T-cell (primary cell): ENCODE measurements at regions of chr3 and their contacts with region 1.

Region 1: DNA sequence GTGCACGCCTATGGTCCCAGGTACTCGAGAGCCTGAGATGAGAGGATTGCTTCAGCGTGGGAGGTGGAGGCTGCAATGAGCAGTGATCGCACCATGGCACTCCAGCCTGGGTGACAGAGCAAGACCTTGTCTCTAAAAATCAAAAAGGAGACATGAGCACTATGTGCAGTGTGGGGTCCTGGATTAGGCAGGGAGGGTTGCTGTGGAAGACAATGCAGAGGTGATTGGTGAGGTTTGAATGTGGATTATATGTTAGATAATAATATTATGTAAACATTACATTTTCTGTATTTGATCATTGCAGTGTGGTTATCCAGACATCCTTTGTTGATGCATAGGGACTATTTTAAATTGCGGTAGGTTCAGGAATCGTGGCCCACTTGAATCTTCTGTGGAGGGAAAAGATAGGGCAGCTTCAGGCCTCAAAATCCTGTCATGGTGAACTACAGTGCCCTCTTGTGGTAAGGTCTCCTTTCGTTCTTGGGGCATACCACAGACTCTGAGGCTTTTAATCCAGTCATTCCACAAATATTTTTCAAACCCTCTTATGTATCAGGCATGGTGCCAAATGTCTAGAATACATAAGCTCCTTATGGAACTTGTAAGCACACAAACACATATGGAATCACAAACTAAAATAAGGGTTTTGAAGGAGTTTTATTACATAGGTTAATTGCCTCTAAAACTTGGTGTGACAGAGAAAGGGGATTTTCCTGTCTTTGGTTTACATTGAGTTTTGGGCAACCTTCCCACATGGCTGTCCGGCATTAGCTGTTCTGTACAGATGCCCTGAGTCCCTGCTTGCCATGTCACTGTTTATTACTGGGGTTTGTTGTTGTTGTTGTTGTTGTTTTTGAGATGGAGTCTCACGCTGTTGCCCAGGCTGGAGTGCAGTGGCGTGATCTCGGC is 37.7 kb downstream of the GPD1L start:
- DNase-seq: peak in 28 of 35 experiments; percentile 7 to 82 (median 30)
- ATAC-seq: peak; percentile 52 to 66 (median 61)
- H3K4me3 ChIP-seq: no peak overlapping the region
- H3K4me3 Mint-ChIP-seq: no peak overlapping the region
- H3K27ac ChIP-seq: no peak overlapping the region
- H3K27ac Mint-ChIP-seq: no peak overlapping the region
- H3K4me1 ChIP-seq: peaks cover 0 to under 1% of the 10 kb centered on the region in 2 experiments
- H3K4me1 Mint-ChIP-seq: peaks cover 0 to 6% (median 3%) of the 10 kb centered on the region in 3 donors
- H3K27me3 ChIP-seq: no peaks in the 10 kb centered on the region
- H3K27me3 Mint-ChIP-seq: no peaks in the 10 kb centered on the region

Region 2: GRCh38 chr3:32018757-32019564 is 125.1 kb before region 1 on chr3:
- CTCF ChIA-PET with region 1: interaction called, 16 to 33 read pairs
- POLR2A ChIA-PET with region 1: interaction called in 1 of 2 experiments, 4 read pairs
- DNase-seq: peak in 1 of 35 experiments; percentile 56
- ATAC-seq: peak in 2 of 4 experiments; percentile 40 to 52
- H3K4me3 ChIP-seq: no peak overlapping the region
- H3K4me3 Mint-ChIP-seq: no peak overlapping the region
- H3K27ac ChIP-seq: no peak overlapping the region
- H3K27ac Mint-ChIP-seq: no peak overlapping the region
- H3K4me1 ChIP-seq: no peaks in the 10 kb centered on the region
- H3K4me1 Mint-ChIP-seq: no peaks in the 10 kb centered on the region
- H3K27me3 ChIP-seq: no peaks in the 10 kb centered on the region
- H3K27me3 Mint-ChIP-seq: no peaks in the 10 kb centered on the region